Naive thymus-derived CD4-positive, alpha-beta T cell (primary cell): ENCODE measurements at regions of chr12 and their contacts with region 1.

Region 1: DNA sequence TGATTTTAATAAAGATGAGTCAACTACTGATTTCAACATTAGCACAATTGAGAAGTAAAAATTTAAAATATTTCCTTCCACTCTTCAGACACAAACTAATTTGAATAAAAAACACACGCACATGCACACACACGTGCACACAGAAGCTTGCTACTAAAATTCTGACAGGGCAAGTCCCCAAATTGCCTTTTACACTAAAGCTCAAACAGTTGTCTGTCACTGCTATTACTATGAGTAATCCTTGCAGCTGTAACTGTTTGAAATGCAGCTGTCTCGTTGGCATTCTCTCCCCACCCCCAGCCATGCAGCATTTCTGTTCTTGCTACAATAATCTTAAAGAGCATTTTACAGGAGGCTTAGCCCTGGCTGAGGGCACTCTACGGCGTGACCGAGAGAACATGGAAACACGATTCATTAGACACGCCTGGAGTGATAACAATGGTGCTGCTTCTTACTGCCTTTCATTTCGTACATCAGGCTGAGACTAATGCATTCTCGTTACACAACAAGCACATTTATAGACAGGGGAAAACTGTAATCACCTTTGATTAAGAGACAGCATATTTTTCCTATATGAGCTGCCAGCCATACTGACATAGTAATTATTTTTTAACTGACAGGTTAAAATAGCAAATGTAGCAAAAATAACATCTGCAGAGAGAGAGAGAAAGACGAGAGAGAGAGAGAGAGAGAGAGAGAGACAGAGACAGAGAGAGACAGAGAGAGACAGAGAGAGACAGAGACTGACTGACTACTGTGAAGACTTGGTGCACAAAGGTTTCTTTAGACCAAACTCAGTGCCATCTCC is 153.8 kb downstream of the MED13L start:
- DNase-seq: peak in 2 of 9 donors; percentile 11 to 20
- ATAC-seq: peak; percentile 77
- H3K4me3 ChIP-seq: no peak overlapping the region
- H3K4me3 Mint-ChIP-seq: peak overlapping the region in 8 of 10 donors; percentile 1 to 70 (median 20)
- H3K27ac ChIP-seq: no peak overlapping the region
- H3K27ac Mint-ChIP-seq: peak overlapping the region in 4 of 9 donors; percentile 13 to 60 (median 34)
- H3K4me1 ChIP-seq: peaks cover 0 to 34% of the 10 kb centered on the region in 2 donors
- H3K4me1 Mint-ChIP-seq: peaks cover 38 to 97% (median 82%) of the 10 kb centered on the region in 7 donors
- H3K27me3 ChIP-seq: no peaks in the 10 kb centered on the region
- H3K27me3 Mint-ChIP-seq: no peaks in the 10 kb centered on the region

Region 2: DNA sequence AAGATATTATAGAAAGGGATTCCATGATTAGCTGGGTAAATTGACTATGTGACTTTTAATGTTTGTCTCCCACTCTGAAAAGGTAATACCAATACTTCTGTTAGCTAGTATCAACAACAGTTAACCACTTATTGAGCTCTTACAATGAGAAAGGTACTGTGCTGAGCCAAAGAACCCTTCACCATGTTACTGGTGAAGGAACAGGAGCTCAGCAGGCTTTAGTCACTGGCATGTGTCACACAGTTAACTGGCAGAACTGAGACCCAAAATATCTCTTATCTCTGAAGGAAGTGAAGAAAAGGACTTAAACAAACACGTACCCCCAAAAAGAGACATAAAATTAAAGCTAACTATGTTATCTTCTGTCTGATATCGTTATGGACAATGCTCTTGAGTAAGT is 16.8 kb before region 1 on chr12:
- CTCF ChIA-PET with region 1: no interaction called
- POLR2A ChIA-PET with region 1: interaction called, 3 read pairs
- intact Hi-C with region 1: loop called in 1 of 2 experiments (anchors 2 kb)
- DNase-seq: no peak
- ATAC-seq: no peak
- H3K4me3 ChIP-seq: no peak overlapping the region
- H3K4me3 Mint-ChIP-seq: no peak overlapping the region
- H3K27ac ChIP-seq: no peak overlapping the region
- H3K27ac Mint-ChIP-seq: peak overlapping the region in 1 of 9 donors; percentile 17
- H3K4me1 ChIP-seq: no peaks in the 10 kb centered on the region
- H3K4me1 Mint-ChIP-seq: peaks cover 4 to 47% (median 22%) of the 10 kb centered on the region in 7 donors
- H3K27me3 ChIP-seq: no peaks in the 10 kb centered on the region
- H3K27me3 Mint-ChIP-seq: no peaks in the 10 kb centered on the region

Region 3: DNA sequence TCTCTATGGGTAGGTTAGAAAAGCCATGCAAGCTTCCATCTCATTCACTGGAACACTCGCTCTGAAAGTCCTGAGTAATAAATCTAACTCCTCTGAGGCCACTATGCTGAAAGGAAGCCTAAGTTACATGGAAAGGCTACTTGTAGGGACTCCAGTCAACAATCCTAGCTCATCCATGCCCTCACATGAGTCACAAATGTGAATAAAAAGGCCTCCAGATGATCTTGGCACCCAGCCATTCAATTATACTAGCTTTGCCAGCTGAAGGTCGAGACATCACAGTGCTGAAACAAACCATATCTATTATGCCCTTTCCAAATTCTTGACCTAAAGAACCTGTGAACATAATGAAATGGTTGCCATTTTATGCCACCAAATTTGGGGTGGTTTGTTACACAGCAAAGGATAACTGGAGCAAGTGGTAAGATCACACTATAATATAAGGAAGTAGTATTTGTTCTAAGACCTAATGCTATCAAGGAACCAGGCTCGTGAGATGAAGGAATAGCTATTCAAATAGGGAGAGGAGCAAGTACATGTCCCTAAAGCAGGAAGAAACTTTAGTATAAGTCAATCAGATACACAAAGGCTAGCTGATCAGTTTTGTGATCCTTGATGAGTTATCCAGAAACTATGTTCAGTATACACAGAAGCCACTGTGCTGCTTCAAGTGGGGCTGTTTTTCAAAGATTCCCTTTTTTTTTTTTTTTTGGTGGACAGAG is 11.7 kb after region 1 on chr12:
- CTCF ChIA-PET with region 1: no interaction called
- POLR2A ChIA-PET with region 1: no interaction called
- intact Hi-C with region 1: loop called in 1 of 2 experiments (anchors 2 kb)
- DNase-seq: no peak
- ATAC-seq: no peak
- H3K4me3 ChIP-seq: no peak overlapping the region
- H3K4me3 Mint-ChIP-seq: peak overlapping the region in 2 of 10 donors; percentile 16 to 55
- H3K27ac ChIP-seq: no peak overlapping the region
- H3K27ac Mint-ChIP-seq: peak overlapping the region in 3 of 9 donors; percentile 15 to 91 (median 50)
- H3K4me1 ChIP-seq: peaks cover 4 to 36% of the 10 kb centered on the region in 2 donors
- H3K4me1 Mint-ChIP-seq: peaks cover 56 to 88% (median 79%) of the 10 kb centered on the region in 7 donors
- H3K27me3 ChIP-seq: no peaks in the 10 kb centered on the region
- H3K27me3 Mint-ChIP-seq: no peaks in the 10 kb centered on the region